H1 (cell line): ENCODE measurements at regions of chr6 and their contacts with region 1.

Region 1: DNA sequence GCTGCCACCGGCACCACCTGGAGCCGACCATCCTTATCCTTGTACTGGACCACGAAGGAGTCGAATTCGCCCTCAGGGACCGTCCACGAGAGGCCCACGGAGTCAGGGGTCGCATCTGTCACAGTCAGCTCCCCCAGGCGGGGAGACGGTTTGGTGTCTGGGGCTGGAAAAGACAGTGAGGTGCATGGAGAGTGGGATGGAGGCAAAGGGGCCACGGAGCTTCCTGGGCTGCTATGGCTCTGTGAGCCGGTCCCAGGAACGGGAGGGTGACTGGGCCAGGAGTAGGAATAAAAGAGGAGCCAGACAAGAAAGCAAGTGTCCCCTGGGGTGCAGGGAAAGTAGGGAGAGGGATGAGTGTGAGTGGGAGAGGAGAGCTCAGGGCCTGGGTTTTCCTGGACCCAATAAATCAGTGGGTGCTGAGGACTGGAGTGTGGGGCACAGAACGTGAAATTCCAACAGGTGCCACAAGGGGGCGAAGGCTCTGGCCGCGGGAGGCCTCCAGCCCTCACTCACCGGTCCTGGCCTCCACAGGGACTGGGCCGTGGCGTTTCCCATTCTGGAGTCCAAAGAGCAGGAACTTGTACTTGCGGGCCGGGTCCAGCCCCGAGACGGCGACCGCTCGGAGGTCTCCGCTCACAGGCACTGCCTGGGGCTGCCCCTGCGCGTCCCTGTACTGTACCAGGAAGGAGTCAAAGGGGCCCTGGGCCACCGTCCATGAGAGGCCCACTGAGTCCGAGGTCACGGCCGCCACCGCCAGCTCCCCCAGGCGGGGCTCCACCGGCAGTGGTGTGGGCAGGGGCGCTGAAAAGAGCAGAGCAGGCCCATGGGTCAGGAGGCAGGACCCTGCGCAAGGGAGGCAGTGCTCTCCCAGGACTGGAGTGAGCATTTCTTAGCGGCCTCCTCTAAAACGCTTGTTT is 9.9 kb downstream of the CYP21A2 start:
- DNase-seq: peak; percentile 31 to 97
- H3K4me3 ChIP-seq: no peak overlapping the region
- H3K27ac ChIP-seq: no peak overlapping the region
- H3K4me1 ChIP-seq: peaks cover 0 to 7% (median 4%) of the 10 kb centered on the region in 4 experiments; a peak in 4 of 7 replicates
- H3K27me3 ChIP-seq: no peaks in the 10 kb centered on the region
- CTCF ChIP-seq: peak; percentile 86 to 93 (median 92)
- EP300 ChIP-seq: no peak
- POLR2A ChIP-seq: no peak
- RAD21 ChIP-seq: peak; percentile 60 to 74

Region 2: DNA sequence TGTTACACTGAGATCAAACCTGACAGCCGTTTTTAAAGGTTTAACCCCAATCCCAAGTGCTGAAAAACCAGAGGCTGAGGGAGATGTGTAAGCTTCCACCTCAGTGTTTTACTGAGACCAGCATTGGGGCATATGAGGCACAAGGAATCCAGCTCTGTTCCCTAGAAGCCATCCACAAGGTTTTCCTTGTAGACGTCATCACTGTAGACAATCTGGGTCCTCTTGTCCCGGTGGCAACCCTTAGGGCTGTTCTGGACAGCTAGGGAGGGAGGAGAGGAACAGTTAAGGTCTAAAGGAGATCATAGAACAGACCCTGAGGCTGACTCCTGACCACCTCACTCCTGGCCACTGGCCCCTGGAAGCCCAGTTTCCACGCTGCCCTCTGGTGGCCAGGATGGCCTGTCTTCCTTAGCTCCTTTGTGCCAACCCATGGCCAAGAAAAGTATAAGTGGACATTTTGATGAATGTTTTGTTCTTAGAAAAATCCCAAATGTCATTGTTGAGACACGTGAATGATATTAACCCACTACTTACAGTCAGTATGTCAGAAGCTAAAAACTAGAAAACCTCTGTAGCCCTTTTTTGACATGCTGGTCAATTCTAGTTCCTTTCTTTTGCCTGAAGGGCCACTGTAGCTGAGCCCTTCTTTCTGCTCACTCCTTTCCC is 95.8 kb before region 1 on chr6:
- CTCF ChIA-PET with region 1: interaction called, 16 read pairs
- POLR2A ChIA-PET with region 1: no interaction called
- DNase-seq: peak in 1 of 2 experiments; percentile 76
- H3K4me3 ChIP-seq: no peak overlapping the region
- H3K27ac ChIP-seq: no peak overlapping the region
- H3K4me1 ChIP-seq: 0 out of 7 replicates have a peak, but pooled peaks cover 0 to 2% (median 0%) of the 10 kb centered on the region in 4 experiments
- H3K27me3 ChIP-seq: peaks cover 0 to 3% (median 1%) of the 10 kb centered on the region in 4 experiments; a peak in 2 of 7 replicates
- CTCF ChIP-seq: peak; percentile 84 to 89 (median 88)
- EP300 ChIP-seq: no peak
- POLR2A ChIP-seq: no peak
- RAD21 ChIP-seq: peak; percentile 66 to 74

Region 3: GRCh38 chr6:32058511-32058963 is 10.4 kb after region 1 on chr6:
- CTCF ChIA-PET with region 1: interaction called, 38 read pairs
- POLR2A ChIA-PET with region 1: interaction called, 3 read pairs
- DNase-seq: no peak
- H3K4me3 ChIP-seq: no peak overlapping the region
- H3K27ac ChIP-seq: no peak overlapping the region
- H3K4me1 ChIP-seq: no peaks in the 10 kb centered on the region
- H3K27me3 ChIP-seq: no peaks in the 10 kb centered on the region
- CTCF ChIP-seq: no peak
- EP300 ChIP-seq: no peak
- POLR2A ChIP-seq: no peak
- RAD21 ChIP-seq: no peak

Region 4: DNA sequence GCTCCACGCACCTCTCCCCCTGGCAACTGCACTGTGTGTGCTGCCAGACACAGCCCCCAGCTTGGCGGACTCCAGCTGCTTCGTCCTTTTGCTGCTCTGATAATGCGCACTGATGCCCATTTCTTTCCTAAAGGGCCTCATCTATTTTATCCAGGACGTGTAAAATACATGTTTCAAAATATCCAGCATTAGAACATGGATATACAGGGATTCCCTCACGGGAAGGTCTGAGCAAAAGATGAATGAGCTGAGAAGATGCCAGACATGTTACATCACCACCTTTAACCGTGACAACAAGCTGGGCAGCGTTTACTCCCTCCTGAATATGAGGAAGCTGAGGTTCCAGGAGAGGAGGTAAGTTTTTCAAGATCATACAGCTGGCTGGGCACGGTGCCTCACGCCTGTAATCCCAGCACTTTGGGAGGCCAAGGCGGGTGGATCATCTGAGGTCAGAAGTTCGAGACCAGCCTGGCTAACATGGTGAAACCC is 28.3 kb after region 1 on chr6:
- CTCF ChIA-PET with region 1: interaction called, 28 read pairs
- POLR2A ChIA-PET with region 1: interaction called, 5 read pairs
- DNase-seq: no peak
- H3K4me3 ChIP-seq: no peak overlapping the region
- H3K27ac ChIP-seq: no peak overlapping the region
- H3K4me1 ChIP-seq: peaks cover 0 to 3% (median 1%) of the 10 kb centered on the region in 4 experiments; a peak in 3 of 7 replicates
- H3K27me3 ChIP-seq: no peaks in the 10 kb centered on the region
- CTCF ChIP-seq: no peak
- EP300 ChIP-seq: no peak
- POLR2A ChIP-seq: no peak
- RAD21 ChIP-seq: no peak

Region 5: DNA sequence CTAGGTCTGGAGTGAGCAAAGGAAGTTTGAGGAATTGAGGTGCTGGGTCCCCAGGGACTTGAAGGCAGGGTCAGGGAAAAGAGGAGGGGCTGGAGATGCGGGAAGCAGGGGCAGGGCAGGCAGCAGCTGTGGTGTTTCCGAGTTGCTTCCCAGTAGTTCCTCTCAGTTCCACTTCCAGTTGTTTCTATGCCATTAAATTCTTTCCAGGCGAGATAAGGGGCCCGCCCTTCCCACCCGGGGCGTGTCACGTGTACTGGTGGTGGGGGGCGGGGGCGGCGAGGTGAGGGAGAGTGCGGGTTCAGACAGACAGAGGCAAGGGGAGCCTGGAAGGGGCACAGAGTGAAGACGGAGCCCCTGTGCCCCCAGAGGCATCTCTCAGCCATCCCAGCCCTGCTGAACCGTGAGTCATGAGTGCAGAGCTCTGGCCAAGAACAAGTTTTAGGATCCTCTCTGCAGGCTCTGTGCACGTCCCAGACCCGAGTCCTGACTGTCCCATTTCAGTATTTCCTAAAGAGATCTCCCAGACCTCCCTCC is 60.1 kb after region 1 on chr6:
- CTCF ChIA-PET with region 1: interaction called, 11 read pairs
- POLR2A ChIA-PET with region 1: no interaction called
- DNase-seq: no peak
- H3K4me3 ChIP-seq: peak overlapping the region in 3 of 4 experiments; percentile 5 to 9 (median 9); a peak in 3 of 8 replicates
- H3K27ac ChIP-seq: no peak overlapping the region
- H3K4me1 ChIP-seq: peaks cover 2 to 13% (median 7%) of the 10 kb centered on the region in 4 experiments
- H3K27me3 ChIP-seq: peaks cover 0 to 11% (median 6%) of the 10 kb centered on the region in 4 experiments; a peak in 5 of 7 replicates
- CTCF ChIP-seq: no peak
- EP300 ChIP-seq: no peak
- POLR2A ChIP-seq: no peak
- RAD21 ChIP-seq: no peak

Region 6: GRCh38 chr6:32127717-32128592 is 79.8 kb after region 1 on chr6 and contains the start of gene ATF6B:
- CTCF ChIA-PET with region 1: no interaction called
- POLR2A ChIA-PET with region 1: no interaction called
- DNase-seq: peak; percentile 91 to 96
- H3K4me3 ChIP-seq: peak within 1 kb of the TSS; percentile 95 to 100 (median 99)
- H3K27ac ChIP-seq: peak within 1 kb of the TSS; percentile 98
- H3K4me1 ChIP-seq: peaks cover 3 to 19% (median 8%) of the 10 kb centered on the region in 4 experiments; a peak in 6 of 7 replicates
- H3K27me3 ChIP-seq: no peaks in the 10 kb centered on the region
- CTCF ChIP-seq: no peak
- EP300 ChIP-seq: no peak
- POLR2A ChIP-seq: peak; percentile 52 to 86; a peak in 2 of 3 replicates
- RAD21 ChIP-seq: no peak
- total RNA-seq, gene ATF6B: 36.2 and 38.1 TPM in 2 replicates